Caco-2 (cell line): ENCODE measurements at regions of chr12 and their contacts with region 1.

Region 1: DNA sequence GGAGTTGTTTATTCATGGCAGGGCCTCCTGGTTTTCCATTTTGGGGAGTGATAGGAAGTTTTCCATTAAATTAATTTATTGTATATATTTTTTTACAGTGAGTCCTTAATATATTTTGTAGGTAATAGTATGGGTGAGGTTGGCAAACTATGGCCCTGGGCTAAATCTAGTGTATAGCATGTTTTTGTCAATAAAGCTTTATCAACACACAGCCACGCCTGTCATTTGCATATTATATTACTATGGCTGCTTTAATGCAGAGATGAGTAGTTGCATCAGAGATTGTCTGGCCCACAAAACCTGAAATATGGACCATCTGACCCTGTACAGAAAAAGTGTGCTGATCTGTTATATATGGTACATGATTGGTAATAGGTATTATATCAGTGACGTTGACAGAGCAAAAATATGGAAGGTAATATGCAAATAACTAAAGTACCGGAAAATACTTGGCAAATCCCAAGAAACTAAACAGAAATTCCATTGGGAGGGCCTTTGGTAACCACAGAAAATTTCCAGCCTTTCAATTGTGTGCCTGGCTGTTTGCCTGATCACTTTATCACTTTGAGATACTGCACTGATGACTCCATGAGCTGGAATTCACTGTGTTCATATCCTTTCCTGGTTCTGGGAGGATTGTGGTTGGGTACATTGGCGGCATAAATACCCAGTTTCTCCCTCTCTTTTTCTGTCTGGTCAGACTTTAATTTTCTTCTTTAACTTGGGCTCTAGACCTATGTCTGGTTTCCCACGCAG is 61.7 kb upstream of the RFLNA start:
- DNase-seq: peak in 1 of 2 experiments; percentile 22
- H3K4me3 ChIP-seq: peak overlapping the region; percentile 39
- H3K4me3 Mint-ChIP-seq: peak overlapping the region; percentile 70
- H3K27ac Mint-ChIP-seq: peak overlapping the region; percentile 80
- H3K4me1 ChIP-seq: peaks cover 57% of the 10 kb centered on the region
- H3K4me1 Mint-ChIP-seq: peaks cover 34% of the 10 kb centered on the region
- H3K27me3 ChIP-seq: no peaks in the 10 kb centered on the region
- H3K27me3 Mint-ChIP-seq: no peaks in the 10 kb centered on the region
- CTCF ChIP-seq: no peak

Region 2: DNA sequence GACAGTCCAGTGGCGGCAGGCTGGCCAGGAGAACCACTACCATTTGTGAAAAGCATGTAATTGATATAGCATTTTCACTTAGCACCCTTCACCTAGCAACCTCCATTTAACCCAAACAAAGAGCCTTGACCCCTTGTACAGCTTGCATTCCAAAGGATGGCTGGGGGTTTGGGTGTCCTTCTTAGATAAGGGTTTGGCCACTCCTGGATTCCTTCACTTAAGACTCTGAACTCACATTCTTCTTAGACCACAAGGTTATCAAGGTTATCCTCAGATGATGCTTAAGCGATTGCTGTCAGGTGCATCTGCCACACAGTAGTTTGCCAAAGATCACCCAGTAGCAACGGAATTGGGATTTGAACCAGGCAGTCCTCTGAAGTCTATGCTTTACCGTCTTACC is 157.4 kb before region 1 on chr12:
- CTCF ChIA-PET with region 1: interaction called, 4 read pairs
- POLR2A ChIA-PET with region 1: interaction called, 3 read pairs
- intact Hi-C with region 1: loop called (anchors 1 kb)
- DNase-seq: peak; percentile 88 to 91
- H3K4me3 ChIP-seq: no peak overlapping the region
- H3K4me3 Mint-ChIP-seq: peak overlapping the region; percentile 63
- H3K27ac Mint-ChIP-seq: peak overlapping the region; percentile 99
- H3K4me1 ChIP-seq: peaks cover 36% of the 10 kb centered on the region
- H3K4me1 Mint-ChIP-seq: peaks cover 33% of the 10 kb centered on the region
- H3K27me3 ChIP-seq: no peaks in the 10 kb centered on the region
- H3K27me3 Mint-ChIP-seq: no peaks in the 10 kb centered on the region
- CTCF ChIP-seq: no peak

Region 3: GRCh38 chr12:124140944-124141486 is 92.2 kb before region 1 on chr12:
- CTCF ChIA-PET with region 1: no interaction called
- POLR2A ChIA-PET with region 1: no interaction called
- intact Hi-C with region 1: loop called (anchors 5 kb)
- DNase-seq: no peak
- H3K4me3 ChIP-seq: no peak overlapping the region
- H3K4me3 Mint-ChIP-seq: no peak overlapping the region
- H3K27ac Mint-ChIP-seq: no peak overlapping the region
- H3K4me1 ChIP-seq: peaks cover 21% of the 10 kb centered on the region
- H3K4me1 Mint-ChIP-seq: peaks cover 26% of the 10 kb centered on the region
- H3K27me3 ChIP-seq: no peaks in the 10 kb centered on the region
- H3K27me3 Mint-ChIP-seq: no peaks in the 10 kb centered on the region
- CTCF ChIP-seq: no peak

Region 4: GRCh38 chr12:124188561-124189405 is 44.4 kb before region 1 on chr12:
- CTCF ChIA-PET with region 1: no interaction called
- POLR2A ChIA-PET with region 1: no interaction called
- intact Hi-C with region 1: loop called (anchors 2 kb)
- DNase-seq: peak; percentile 83 to 88
- H3K4me3 ChIP-seq: no peak overlapping the region
- H3K4me3 Mint-ChIP-seq: peak overlapping the region; percentile 44
- H3K27ac Mint-ChIP-seq: peak overlapping the region; percentile 100
- H3K4me1 ChIP-seq: peaks cover 65% of the 10 kb centered on the region
- H3K4me1 Mint-ChIP-seq: peaks cover 46% of the 10 kb centered on the region
- H3K27me3 ChIP-seq: no peaks in the 10 kb centered on the region
- H3K27me3 Mint-ChIP-seq: no peaks in the 10 kb centered on the region
- CTCF ChIP-seq: no peak

Region 5: DNA sequence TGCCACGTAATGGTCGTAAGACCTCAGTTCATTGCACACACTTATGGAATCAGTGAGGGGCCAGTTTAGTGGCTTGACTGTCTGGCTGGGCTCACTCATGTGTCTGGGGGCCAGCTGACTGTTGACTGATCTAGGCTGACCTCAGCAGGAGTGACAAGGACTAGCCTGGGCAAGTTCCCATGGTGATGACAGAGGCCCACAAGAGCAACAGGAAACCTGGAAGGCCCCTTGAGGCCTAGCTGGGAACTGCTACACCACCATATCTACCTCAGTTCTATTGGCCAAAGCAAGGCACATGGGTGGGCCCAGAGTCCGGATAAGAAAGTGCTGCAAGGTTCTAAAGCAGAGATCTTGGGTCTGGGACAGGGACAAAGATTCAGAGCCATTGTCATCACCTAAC is 40.4 kb after region 1 on chr12:
- CTCF ChIA-PET with region 1: no interaction called
- POLR2A ChIA-PET with region 1: no interaction called
- intact Hi-C with region 1: loop called (anchors 2 kb)
- DNase-seq: peak; percentile 72 to 84
- H3K4me3 ChIP-seq: no peak overlapping the region
- H3K4me3 Mint-ChIP-seq: no peak overlapping the region
- H3K27ac Mint-ChIP-seq: no peak overlapping the region
- H3K4me1 ChIP-seq: peaks cover 10% of the 10 kb centered on the region
- H3K4me1 Mint-ChIP-seq: peaks cover 11% of the 10 kb centered on the region
- H3K27me3 ChIP-seq: no peaks in the 10 kb centered on the region
- H3K27me3 Mint-ChIP-seq: no peaks in the 10 kb centered on the region
- CTCF ChIP-seq: peak; percentile 37

Region 6: GRCh38 chr12:124767066-124767821 is 534.0 kb after region 1 on chr12:
- CTCF ChIA-PET with region 1: no interaction called
- POLR2A ChIA-PET with region 1: no interaction called
- intact Hi-C with region 1: loop called (anchors 10 kb)
- DNase-seq: peak; percentile 74 to 88
- H3K4me3 ChIP-seq: no peak overlapping the region
- H3K4me3 Mint-ChIP-seq: no peak overlapping the region
- H3K27ac Mint-ChIP-seq: no peak overlapping the region
- H3K4me1 ChIP-seq: peaks cover 19% of the 10 kb centered on the region; the same call in 1 of the 2 replicates
- H3K4me1 Mint-ChIP-seq: peaks cover 36% of the 10 kb centered on the region
- H3K27me3 ChIP-seq: no peaks in the 10 kb centered on the region
- H3K27me3 Mint-ChIP-seq: no peaks in the 10 kb centered on the region
- CTCF ChIP-seq: peak; percentile 93 to 99